PC-3 (cell line): ENCODE measurements at regions of chr5 and their contacts with region 1.

Region 1: DNA sequence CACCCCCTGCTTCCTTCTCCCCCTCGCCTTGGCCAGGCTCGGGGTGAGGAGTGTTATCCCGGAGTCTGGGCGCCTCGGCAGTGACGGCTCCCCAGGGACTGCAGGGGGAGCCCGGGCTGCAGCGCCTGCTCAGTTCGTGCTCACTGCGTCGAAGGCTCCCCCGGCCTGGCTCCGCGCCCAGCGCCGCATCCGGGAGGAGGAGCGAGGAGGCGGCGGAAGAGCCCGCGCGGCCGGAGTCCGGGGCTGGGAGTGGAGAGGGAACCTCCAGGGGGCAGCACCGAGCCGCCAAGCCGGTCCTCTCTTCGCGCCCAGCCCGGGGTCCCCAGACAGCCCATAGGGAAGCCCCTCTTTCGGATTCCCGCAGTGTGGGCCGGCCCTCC is 1.3 kb upstream of the EGR1 start:
- DNase-seq: peak; percentile 91
- ATAC-seq: peak; percentile 64
- H3K4me3 ChIP-seq: peak overlapping the region; percentile 71
- H3K27ac ChIP-seq: peak overlapping the region; percentile 68
- H3K4me1 ChIP-seq: peaks cover 5% of the 10 kb centered on the region
- H3K27me3 ChIP-seq: peaks cover 16% of the 10 kb centered on the region
- CTCF ChIP-seq: peak; percentile 79

Region 2: DNA sequence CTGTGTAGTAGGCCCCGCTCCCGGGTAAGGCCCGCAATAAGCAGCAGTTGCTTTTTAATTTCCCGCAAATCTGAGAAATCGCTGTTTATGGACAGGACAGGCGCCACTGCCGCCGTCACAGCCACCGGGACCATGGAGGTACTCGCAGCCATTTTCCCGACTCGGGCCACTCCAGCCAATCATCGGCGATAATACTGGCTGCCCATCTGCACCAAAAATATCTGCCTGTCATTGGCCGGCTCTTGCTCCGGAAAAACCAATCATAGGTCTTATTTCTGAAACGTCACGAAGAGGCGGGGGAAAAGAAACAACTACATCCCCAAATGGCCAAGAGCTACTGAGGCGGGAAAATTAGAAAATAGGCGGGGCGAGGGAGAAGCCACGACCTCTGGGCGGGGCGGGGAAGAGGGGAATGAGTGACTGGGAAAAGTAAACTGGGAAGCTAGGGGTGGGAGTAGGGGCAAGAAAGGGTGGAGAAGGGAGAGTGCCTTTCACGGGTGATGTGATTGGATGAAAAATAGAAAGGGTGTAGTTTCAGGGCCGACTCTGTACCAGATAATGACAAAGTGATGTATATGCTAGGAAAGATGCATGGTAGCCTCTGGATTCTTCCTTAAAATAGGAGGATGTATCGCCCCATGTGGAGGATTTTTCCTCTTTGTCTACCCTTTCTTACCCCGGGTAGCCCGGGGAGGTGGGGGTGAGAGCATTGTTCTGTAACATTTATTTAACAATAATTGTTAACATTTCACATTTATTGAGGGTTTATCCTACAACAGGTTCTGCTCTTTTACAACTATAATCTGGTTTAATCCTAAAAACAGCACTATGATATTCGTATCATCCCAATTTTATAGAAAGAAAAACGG is 250.6 kb before region 1 on chr5 and contains the start of gene CDC23:
- CTCF ChIA-PET with region 1: interaction called, 11 read pairs
- POLR2A ChIA-PET with region 1: no interaction called
- intact Hi-C with region 1: no loop called
- DNase-seq: peak; percentile 95
- ATAC-seq: peak; percentile 94
- H3K4me3 ChIP-seq: peak within 1 kb of the TSS; percentile 100
- H3K27ac ChIP-seq: no peak within 1 kb of the TSS; the same call in 1 of the 2 replicates
- H3K4me1 ChIP-seq: peaks cover 5% of the 10 kb centered on the region
- H3K27me3 ChIP-seq: no peaks in the 10 kb centered on the region
- CTCF ChIP-seq: no peak
- total RNA-seq, gene CDC23: 26.1 and 26.7 TPM in 2 replicates

Region 3: DNA sequence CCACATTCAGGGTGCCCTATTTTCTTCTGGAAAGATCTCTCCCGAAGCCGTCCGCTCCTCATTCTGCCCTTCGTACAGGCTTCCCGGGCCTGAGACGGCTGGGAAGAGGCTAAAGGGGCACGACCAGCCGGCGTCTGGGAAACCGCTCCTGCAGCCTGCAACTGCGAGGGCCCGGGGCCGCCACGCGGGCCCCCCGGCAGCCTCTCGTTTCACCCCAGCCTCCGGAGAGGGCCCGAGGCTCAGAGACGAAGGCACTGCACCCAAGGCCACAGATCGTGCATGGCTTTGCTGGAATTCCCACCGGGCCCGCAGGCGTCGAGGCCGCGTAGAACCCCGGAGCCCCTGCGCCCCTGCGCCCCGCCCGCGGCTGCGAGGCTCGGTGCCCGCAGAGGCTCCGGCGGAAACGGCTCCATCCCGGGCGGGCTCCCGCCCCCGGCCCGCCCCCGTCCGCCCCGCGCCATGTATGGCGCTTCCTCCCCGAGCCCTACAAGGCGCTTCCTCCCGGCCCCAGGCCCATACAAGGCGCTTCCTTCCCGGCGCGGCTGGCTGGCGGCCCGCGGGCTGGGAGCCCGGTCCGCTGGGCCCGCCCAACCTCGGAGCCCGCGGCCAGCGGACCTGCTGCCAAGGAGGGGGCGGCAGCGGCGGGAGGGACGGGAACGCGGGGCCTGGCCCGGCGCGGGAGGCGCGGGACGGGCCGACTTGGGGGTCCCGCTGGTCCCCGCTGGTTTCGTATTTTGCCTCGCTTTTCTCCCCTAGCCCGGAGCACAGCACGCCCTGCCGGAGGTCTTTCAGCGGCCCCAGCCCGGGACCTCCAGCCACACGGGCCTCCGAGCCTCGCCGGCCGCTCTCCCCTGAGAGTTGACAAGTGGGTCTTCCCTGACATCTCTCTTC is 27.9 kb after region 1 on chr5:
- CTCF ChIA-PET with region 1: no interaction called
- POLR2A ChIA-PET with region 1: interaction called, 5 read pairs
- intact Hi-C with region 1: loop called (anchors 1 kb)
- DNase-seq: peak; percentile 81
- ATAC-seq: peak; percentile 99
- H3K4me3 ChIP-seq: peak overlapping the region; percentile 63
- H3K27ac ChIP-seq: no peak overlapping the region
- H3K4me1 ChIP-seq: 0 out of 2 replicates have a peak, but pooled peaks cover 6% of the 10 kb centered on the region
- H3K27me3 ChIP-seq: peaks cover 23% of the 10 kb centered on the region
- CTCF ChIP-seq: no peak

Region 4: GRCh38 chr5:138503487-138504270 is 39.7 kb after region 1 on chr5:
- CTCF ChIA-PET with region 1: interaction called, 6 read pairs
- POLR2A ChIA-PET with region 1: no interaction called
- intact Hi-C with region 1: loop called (anchors 1 kb)
- DNase-seq: peak; percentile 66
- ATAC-seq: peak; percentile 81
- H3K4me3 ChIP-seq: no peak overlapping the region
- H3K27ac ChIP-seq: no peak overlapping the region
- H3K4me1 ChIP-seq: no peaks in the 10 kb centered on the region
- H3K27me3 ChIP-seq: no peaks in the 10 kb centered on the region
- CTCF ChIP-seq: peak; percentile 67

Region 5: GRCh38 chr5:138542956-138543729 is 79.1 kb after region 1 on chr5 and contains the start of gene ETF1:
- CTCF ChIA-PET with region 1: no interaction called
- POLR2A ChIA-PET with region 1: no interaction called
- intact Hi-C with region 1: loop called (anchors 1 kb)
- DNase-seq: peak; percentile 98
- ATAC-seq: peak; percentile 86
- H3K4me3 ChIP-seq: peak within 1 kb of the TSS; percentile 93
- H3K27ac ChIP-seq: peak within 1 kb of the TSS; percentile 83
- H3K4me1 ChIP-seq: peaks cover 38% of the 10 kb centered on the region
- H3K27me3 ChIP-seq: no peaks in the 10 kb centered on the region
- CTCF ChIP-seq: no peak
- total RNA-seq, gene ETF1: 57.3 and 64.1 TPM in 2 replicates